Heart left ventricle (tissue), 16 donors: ENCODE measurements at regions of chr7 and their contacts with region 1.

Region 1: GRCh38 chr7:4681886-4682620 is at the start of gene FOXK1:
- DNase-seq: peak; percentile 76 to 92 (median 86)
- ATAC-seq: peak; percentile 34 to 87 (median 72)
- H3K4me3 ChIP-seq: peak within 1 kb of the TSS; percentile 88 to 99 (median 97)
- H3K27ac ChIP-seq: peak within 1 kb of the TSS; percentile 87 to 99 (median 94)
- H3K4me1 ChIP-seq: peaks cover 4 to 40% (median 21%) of the 10 kb centered on the region in 12 donors
- H3K27me3 ChIP-seq: no peaks in the 10 kb centered on the region
- CTCF ChIP-seq: no peak
- POLR2A ChIP-seq: peak in 1 of 2 donors; percentile 51
- total RNA-seq, gene FOXK1: 12.4 to 43.7 (median 22.5) TPM

Region 2: DNA sequence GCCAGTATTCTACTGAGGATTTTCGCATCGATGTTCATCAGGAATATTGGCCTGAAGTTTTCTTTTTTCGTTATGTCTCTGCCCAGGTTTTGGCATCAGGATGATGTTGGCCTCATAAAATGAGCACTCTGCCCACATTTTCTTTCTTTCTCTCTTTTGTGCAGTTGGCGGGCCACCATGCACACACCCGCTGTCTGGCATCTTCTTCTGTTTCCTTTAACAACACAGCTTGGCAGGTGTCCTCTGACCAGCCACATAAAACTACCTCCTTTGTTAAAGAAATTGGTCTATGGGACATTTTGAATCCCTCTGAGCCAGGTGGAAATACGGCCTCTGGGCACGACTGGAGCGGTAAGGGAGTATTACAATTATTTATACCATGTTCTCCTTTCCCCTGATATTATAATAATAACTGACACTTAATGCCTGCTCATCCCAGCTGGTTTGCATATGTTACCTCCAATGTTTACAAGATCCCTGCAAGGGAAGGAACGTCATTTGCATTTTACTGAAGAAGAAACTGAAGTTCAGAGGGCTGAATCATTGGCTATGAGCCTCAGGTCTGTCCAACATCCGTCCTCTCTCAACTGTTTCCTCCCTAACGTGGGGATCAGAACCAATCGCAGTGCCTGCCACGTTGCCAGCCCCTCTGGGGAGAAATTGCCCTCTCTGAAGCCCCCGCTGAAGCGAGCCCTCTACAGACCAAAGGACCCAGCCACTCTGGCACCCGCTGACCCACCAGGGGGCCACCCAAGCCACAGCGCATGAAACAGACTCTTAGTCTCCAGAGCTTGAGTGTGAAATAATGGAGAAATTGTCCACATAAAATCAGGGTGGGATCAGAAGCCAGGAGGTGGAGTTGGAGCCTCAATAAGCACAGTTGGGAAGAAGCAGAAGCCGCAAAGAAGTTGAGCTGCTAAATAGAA is 124.9 kb before region 1 on chr7:
- intact Hi-C with region 1: no loop called
- DNase-seq: no peak
- ATAC-seq: no peak
- H3K4me3 ChIP-seq: no peak overlapping the region
- H3K27ac ChIP-seq: no peak overlapping the region
- H3K4me1 ChIP-seq: no peaks in the 10 kb centered on the region
- H3K27me3 ChIP-seq: peaks cover 0 to 23% (median 1%) of the 10 kb centered on the region in 9 donors
- CTCF ChIP-seq: no peak
- POLR2A ChIP-seq: no peak

Region 3: DNA sequence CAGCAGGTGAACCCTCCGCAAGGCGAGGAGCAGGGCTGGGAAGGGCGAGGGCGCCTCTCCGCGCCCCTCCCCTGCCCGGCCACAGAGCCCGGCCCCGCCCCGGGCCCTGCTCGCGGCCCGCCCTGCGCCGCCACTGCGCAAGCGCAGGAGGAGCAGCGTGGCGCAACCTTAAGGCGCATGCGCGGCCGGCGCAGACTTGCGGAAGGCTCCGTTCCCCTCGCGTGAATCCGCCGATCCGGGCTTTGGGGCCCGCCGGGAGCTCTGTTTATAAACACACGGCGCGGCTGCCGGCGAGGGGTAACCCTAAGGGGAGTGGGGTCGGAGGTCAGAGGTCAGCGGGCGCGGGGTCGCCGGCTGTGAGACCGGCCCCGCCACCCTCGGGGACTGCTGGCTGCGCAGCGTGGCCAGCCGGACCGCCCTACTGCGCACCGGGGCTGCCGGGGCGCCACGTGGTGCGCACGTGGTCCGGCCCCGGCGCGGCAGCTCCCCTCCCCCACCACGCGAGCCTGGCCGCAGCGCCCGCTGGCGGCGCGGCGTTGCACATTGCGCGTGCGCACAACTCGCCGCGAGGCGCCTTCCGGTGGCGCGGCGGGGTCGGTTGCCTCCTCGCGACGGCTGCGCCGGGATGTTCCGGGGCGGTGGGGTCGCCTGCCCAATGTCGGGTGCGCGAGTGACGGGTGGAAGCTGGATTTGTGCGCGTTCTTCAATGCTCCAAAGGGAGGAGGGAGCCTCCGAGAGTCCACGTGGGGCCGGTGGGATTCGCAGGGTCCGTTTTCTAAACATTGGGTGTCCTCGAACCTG is 40.2 kb before region 1 on chr7:
- intact Hi-C with region 1: loop called (anchors 1 to 5 kb)
- DNase-seq: peak; percentile 92 to 98 (median 95)
- ATAC-seq: peak; percentile 92 to 98 (median 96)
- H3K4me3 ChIP-seq: peak overlapping the region; percentile 15 to 77 (median 64)
- H3K27ac ChIP-seq: peak overlapping the region; percentile 61 to 93 (median 86)
- H3K4me1 ChIP-seq: peaks cover 0 to 15% (median 9%) of the 10 kb centered on the region in 12 donors
- H3K27me3 ChIP-seq: no peaks in the 10 kb centered on the region
- CTCF ChIP-seq: peak in 11 of 12 donors; percentile 10 to 79 (median 55)
- POLR2A ChIP-seq: peak in 1 of 2 donors; percentile 50

Region 4: DNA sequence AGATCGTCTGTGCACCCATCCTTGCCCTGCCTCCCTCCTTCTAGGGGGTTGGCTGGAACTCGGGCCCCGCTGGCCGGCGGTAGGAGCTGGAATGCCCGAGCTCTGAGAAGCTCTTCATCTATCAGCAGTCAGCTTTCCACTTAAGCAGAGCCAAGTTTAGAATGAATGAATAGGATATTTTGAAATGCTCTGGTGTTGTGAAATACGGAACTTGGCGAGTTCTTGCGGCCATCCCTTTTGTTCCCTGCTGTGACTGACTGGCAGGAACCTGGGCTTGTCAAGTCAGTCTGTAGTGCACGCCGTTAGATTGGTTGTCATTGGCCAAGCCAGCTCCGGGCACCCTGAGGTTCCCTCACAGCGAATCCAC is 33.3 kb after region 1 on chr7:
- intact Hi-C with region 1: loop called in 2 of 10 experiments (anchors 5 kb)
- DNase-seq: peak; percentile 60 to 84 (median 78)
- ATAC-seq: peak; percentile 91 to 94 (median 94)
- H3K4me3 ChIP-seq: peak overlapping the region in 4 of 12 donors; percentile 15 to 28 (median 24)
- H3K27ac ChIP-seq: peak overlapping the region in 7 of 12 donors; percentile 10 to 69 (median 49)
- H3K4me1 ChIP-seq: peaks cover 4 to 67% (median 37%) of the 10 kb centered on the region in 12 donors
- H3K27me3 ChIP-seq: no peaks in the 10 kb centered on the region
- CTCF ChIP-seq: no peak
- POLR2A ChIP-seq: no peak

Region 5: DNA sequence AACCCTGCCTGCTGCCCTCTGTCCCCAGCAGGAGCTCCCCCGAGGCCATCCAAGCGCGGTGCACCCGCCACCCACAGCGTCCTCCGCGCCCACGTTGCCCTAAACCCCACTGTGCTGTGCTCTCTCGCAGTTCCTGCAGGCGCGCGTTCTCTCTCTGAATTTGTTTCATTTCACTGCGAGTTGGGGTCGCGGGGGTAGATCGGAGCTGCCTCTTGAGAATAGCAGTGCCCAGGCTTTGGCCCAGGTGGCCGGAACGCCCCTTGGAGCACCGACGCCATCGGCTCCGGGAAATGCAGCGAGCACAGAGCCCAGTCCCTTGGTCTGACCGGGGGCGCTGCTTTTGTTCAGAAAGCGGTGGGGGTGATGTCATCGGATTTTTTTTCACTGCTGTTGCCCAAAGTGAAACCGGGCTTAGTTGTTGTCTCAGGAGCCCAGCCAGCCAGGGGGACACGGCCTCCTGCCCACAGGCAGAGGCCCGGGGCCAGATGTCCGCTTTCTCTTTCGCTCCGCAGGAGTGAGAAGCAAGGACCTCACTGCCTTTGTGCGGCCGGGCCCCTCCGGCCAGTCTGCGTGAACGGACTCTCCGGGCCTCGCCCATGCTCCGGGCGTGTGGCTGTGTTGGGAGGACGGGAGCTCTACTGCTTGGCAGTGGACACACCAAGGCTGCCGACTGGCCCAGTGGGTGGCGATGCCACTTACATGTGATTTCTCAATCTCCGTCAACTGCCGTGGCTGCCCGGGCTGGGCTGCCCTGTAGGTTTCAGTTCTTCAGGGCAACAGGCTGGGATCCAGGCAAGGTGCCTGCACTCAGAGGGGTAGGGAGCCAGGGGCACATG is 43.2 kb after region 1 on chr7:
- intact Hi-C with region 1: loop called in 4 of 10 experiments (anchors 5 kb)
- DNase-seq: peak; percentile 81 to 87 (median 84)
- ATAC-seq: peak; percentile 71 to 87 (median 82)
- H3K4me3 ChIP-seq: peak overlapping the region; percentile 16 to 69 (median 52)
- H3K27ac ChIP-seq: peak overlapping the region; percentile 79 to 96 (median 90)
- H3K4me1 ChIP-seq: peaks cover 0 to 75% (median 48%) of the 10 kb centered on the region in 12 donors
- H3K27me3 ChIP-seq: no peaks in the 10 kb centered on the region
- CTCF ChIP-seq: peak in 1 of 12 donors; percentile 10
- POLR2A ChIP-seq: peak in 1 of 2 donors; percentile 33

Region 6: GRCh38 chr7:4738711-4739527 is 56.9 kb after region 1 on chr7:
- intact Hi-C with region 1: loop called in 3 of 10 experiments (anchors 2 to 5 kb)
- DNase-seq: peak in 3 of 5 donors; percentile 51 to 73 (median 60)
- ATAC-seq: peak in 3 of 4 donors; percentile 60 to 69 (median 68)
- H3K4me3 ChIP-seq: peak overlapping the region in 11 of 12 donors; percentile 16 to 46 (median 37)
- H3K27ac ChIP-seq: peak overlapping the region; percentile 31 to 86 (median 77)
- H3K4me1 ChIP-seq: peaks cover 0 to 58% (median 36%) of the 10 kb centered on the region in 12 donors
- H3K27me3 ChIP-seq: no peaks in the 10 kb centered on the region
- CTCF ChIP-seq: no peak
- POLR2A ChIP-seq: no peak

Region 7: DNA sequence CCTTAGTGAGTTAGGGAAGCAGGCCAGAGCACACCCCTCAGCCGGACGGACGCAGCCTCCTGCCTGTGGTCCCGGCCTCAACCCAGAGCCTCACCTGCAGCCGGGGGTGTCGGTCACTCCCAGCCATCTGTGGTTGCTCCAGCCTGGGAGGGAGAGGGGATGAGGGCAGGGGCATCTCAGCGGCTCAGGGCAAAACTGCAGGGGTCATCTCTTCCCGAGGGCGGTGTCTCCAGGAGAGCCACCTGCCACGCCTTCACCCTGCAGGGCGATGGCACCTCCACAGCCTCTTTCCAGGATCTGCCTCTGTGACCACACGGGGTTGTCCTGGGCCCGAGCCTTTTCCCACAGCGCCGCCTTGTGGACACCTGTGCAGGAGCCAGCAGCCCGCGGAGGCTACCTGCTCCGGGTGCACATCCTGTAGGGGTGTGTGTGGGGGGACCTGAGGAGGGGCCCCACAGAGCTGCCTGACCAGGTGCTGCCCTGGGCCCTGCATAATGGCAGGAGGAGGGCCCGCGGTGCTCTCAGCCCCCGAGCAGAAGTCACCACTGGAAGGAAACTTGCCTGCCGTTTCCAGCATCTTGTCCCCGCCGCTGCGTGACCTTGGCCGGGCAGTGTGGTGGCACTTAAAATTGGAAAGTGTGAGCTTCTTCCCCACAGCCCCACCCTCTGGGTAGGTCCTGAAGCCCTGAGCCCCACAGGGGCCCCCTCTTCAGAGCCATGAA is 71.8 kb after region 1 on chr7:
- intact Hi-C with region 1: loop called in 9 of 10 experiments (anchors 2 to 5 kb)
- DNase-seq: peak; percentile 73 to 93 (median 80)
- ATAC-seq: peak; percentile 76 to 86 (median 82)
- H3K4me3 ChIP-seq: no peak overlapping the region
- H3K27ac ChIP-seq: no peak overlapping the region
- H3K4me1 ChIP-seq: peaks cover 0 to 25% (median 8%) of the 10 kb centered on the region in 12 donors
- H3K27me3 ChIP-seq: no peaks in the 10 kb centered on the region
- CTCF ChIP-seq: peak; percentile 76 to 91 (median 85)
- POLR2A ChIP-seq: no peak

Region 8: DNA sequence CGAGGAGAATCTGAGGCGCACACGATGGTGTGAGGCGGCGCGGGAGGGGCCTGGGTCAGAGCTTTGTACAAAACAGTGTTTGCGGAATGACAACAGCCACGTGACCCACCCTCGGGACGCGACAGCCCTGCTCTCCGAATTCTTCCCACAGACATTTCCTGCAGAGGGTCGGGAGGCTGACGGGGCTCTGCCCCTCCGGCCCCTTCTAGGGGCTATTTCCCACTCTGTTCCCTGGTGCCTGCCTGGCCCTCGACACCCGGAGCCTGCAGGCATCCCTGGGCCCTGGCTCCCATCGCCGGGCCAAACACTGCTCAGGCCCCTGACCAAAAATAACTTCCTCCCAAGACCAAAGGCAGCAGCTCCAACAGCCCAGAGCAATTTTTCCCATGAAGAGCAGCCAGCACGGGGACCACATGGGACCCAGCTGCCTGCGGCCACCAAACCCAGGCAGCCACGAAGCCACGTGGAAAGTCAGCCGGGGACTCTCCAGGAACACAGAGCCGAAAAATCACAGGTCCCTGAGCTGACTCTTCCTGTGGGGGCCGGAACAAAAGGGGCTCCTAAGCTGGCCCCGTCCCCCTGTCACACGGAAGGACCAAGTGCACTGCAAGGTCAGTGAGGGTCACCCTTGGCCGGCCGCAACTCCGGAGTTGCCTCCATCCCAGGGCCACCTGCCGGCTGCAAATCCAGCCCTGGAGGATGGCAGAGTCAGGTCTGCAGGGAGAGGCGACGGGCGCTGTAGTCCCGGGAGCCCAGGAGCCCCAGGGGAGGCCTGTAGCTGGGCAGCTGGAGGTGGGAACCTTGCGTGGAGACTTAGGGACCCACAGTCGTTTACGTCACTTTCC is 137.7 kb after region 1 on chr7:
- intact Hi-C with region 1: no loop called
- DNase-seq: peak in 4 of 5 donors; percentile 52 to 74 (median 71)
- ATAC-seq: peak; percentile 28 to 67 (median 54)
- H3K4me3 ChIP-seq: peak overlapping the region in 3 of 12 donors; percentile 8 to 23 (median 22)
- H3K27ac ChIP-seq: peak overlapping the region; percentile 6 to 86 (median 67)
- H3K4me1 ChIP-seq: peaks cover 0 to 49% (median 15%) of the 10 kb centered on the region in 12 donors
- H3K27me3 ChIP-seq: no peaks in the 10 kb centered on the region
- CTCF ChIP-seq: no peak
- POLR2A ChIP-seq: no peak